ENCODE measurements at regions of chr15 and their contacts with region 1.

Region 1: DNA sequence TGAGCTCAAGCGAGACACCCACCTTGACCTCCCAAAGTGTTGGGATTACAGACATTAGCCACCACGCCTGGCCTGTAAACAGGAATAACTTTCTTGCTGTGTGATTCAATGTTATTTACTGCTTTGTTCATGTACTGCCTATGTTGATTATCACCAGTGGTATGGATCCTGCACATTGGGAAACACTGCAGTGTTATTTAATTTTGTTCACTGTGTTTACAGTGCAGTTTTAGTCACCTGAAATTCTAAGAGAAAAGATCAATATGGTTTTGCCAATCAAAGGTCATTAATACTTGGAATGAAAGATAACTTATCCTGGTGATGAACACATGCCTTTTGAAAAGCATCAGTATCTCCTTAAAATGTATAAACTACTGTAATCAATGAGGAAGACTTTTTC is 8.6 kb upstream of the GABPB1 start:
- DNase-seq: no peak
- H3K27ac ChIP-seq: no peak overlapping the region
- CTCF ChIP-seq: no peak

Region 2: GRCh38 chr15:50390554-50391287 is 27.1 kb after region 1 on chr15:
- CTCF ChIA-PET with region 1: no interaction called
- POLR2A ChIA-PET with region 1: no interaction called
- DNase-seq: no peak
- H3K27ac ChIP-seq: no peak overlapping the region
- CTCF ChIP-seq: no peak

Region 3: GRCh38 chr15:50523851-50524251 is 160.2 kb after region 1 on chr15:
- CTCF ChIA-PET with region 1: no interaction called
- POLR2A ChIA-PET with region 1: interaction called, 10 read pairs
- DNase-seq: no peak
- H3K27ac ChIP-seq: no peak overlapping the region
- CTCF ChIP-seq: no peak

Measured in RWPE1 (cell line).